Vagina (tissue), 2 donors: ENCODE measurements at regions of chr17 and their contacts with region 1.

Region 1: GRCh38 chr17:65737451-65737850 is 176.0 kb upstream of the AXIN2 start:
- DNase-seq: no peak
- H3K4me3 ChIP-seq: no peak overlapping the region
- H3K27ac ChIP-seq: no peak overlapping the region
- H3K4me1 ChIP-seq: no peaks in the 10 kb centered on the region
- H3K27me3 ChIP-seq: no peaks in the 10 kb centered on the region
- CTCF ChIP-seq: no peak
- POLR2A ChIP-seq: no peak

Region 2: GRCh38 chr17:65656382-65657250 is 80.8 kb before region 1 on chr17:
- intact Hi-C with region 1: loop called (anchors 1 kb)
- DNase-seq: no peak
- H3K4me3 ChIP-seq: no peak overlapping the region
- H3K27ac ChIP-seq: no peak overlapping the region
- H3K4me1 ChIP-seq: no peaks in the 10 kb centered on the region
- H3K27me3 ChIP-seq: no peaks in the 10 kb centered on the region
- CTCF ChIP-seq: no peak
- POLR2A ChIP-seq: no peak